ENCODE measurements at regions of chr6 and their contacts with region 1.

Region 1: DNA sequence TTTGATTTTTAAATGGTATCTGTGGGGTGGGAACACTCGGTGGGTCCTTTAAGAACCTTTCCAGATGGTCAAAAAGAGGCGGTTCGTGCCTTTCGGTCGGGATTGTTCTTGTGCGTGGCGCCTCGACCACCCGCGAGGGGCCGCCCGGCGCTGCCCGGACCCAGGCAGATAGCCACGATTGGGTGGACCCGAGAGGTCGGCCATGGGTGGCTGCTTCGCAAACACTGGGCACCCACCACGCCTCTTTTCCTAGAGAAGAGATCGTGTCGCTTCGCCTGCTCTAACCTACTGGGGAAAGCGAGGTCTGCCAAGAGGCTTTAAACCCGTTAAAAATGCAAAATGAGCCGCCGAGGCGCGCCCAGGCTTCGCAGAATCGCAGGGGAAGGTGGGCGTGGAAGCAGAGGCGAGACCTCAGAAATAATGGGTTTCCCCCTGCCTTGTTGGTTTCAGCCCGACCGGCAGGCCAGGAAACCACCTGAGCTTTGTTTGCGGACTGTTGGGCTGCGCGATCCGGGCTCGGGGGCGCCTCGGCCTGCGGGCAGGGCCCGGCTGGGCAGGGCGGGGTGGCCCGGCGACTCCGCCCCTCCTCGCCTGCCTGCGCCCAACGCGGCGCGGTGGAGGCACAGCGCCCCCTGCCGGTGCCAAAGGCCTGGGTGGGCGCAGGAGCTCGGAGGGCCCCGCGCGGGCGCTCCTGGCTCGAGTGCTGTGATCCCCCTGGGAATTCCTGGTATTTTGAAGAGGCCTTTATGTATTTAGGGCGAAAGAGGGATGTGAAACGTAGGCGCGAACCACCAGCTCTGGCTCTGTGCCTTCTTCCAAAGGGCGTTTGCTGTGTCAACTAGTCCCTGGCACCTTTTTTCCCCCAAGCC is 1.6 kb downstream of the MARCKS start:
- DNase-seq: peak; percentile 87 to 96 (median 95)
- ATAC-seq: peak; percentile 93 to 95
- H3K4me3 ChIP-seq: peak overlapping the region; percentile 97
- H3K27ac ChIP-seq: peak overlapping the region; percentile 89
- H3K4me1 ChIP-seq: no peaks in the 10 kb centered on the region
- H3K27me3 ChIP-seq: no peaks in the 10 kb centered on the region

Region 2: DNA sequence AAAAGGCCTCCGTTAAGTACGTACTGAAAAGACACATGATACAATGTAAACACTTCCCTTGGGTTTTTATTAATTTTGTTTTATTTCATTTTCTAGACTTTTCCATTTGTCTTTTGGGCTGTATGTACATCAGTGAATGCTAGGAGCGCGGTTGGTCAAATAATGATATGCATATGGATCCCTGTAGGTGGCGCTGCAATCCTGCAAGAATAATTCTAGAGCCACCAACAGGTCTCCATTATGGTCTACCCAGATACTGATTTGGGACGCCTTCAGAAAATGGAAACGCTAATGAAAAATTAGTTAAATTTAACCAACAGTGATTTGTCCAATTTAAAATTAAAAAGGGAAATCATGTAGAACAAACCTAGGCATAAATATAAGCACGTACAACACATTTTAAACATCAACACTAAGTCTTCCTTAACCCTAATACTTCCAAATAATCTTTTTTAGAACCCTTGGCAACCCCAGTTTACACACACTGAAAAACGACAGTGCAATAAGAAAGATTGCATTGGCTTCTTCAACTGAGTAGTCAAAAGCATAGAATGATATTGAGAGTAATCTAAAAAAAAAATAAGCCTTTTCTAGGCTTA is 1078.1 kb before region 1 on chr6:
- intact Hi-C with region 1: loop called in 1 of 4 experiments (anchors 10 kb)
- DNase-seq: peak; percentile 62 to 70 (median 64)
- ATAC-seq: peak; percentile 89 to 94
- H3K4me3 ChIP-seq: no peak overlapping the region
- H3K27ac ChIP-seq: no peak overlapping the region
- H3K4me1 ChIP-seq: no peaks in the 10 kb centered on the region
- H3K27me3 ChIP-seq: no peaks in the 10 kb centered on the region

Region 3: DNA sequence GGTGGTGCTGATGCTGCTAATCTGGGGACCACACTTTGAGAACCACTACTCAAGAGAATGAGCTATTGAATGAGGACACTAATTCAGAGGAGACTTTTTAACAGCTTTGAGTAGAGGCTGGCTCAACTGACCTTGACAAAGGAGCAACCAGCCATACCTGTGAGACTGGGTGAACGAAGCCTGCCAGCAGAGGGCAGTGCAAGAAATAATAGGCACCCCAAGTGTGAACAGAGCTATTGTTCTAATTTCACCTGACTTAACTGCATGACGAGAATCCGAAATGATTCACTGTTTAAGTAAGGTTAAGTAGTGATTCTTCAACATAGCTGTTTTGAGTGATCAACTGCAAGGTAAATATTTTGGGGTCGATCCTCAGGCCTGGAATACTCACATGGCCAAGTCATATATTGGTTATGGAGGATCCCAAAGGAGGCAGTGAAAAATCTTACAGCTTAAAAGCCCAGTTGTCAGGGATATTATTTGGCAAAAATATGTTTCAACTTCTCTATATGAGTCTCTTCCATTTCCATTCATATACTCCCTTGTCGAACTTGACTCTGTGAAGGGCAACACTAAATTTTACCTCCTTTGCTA is 552.1 kb before region 1 on chr6:
- intact Hi-C with region 1: loop called in 1 of 4 experiments (anchors 5 kb)
- DNase-seq: peak; percentile 55 to 89 (median 57)
- ATAC-seq: peak; percentile 74 to 79
- H3K4me3 ChIP-seq: no peak overlapping the region
- H3K27ac ChIP-seq: no peak overlapping the region
- H3K4me1 ChIP-seq: no peaks in the 10 kb centered on the region
- H3K27me3 ChIP-seq: no peaks in the 10 kb centered on the region

Region 4: GRCh38 chr6:113416170-113416569 is 442.5 kb before region 1 on chr6:
- intact Hi-C with region 1: loop called in 1 of 4 experiments (anchors 5 kb)
- DNase-seq: peak in 2 of 3 donors; percentile 18 to 35
- ATAC-seq: no peak
- H3K4me3 ChIP-seq: no peak overlapping the region
- H3K27ac ChIP-seq: no peak overlapping the region
- H3K4me1 ChIP-seq: no peaks in the 10 kb centered on the region
- H3K27me3 ChIP-seq: no peaks in the 10 kb centered on the region

Region 5: GRCh38 chr6:113564371-113565161 is 294.1 kb before region 1 on chr6:
- intact Hi-C with region 1: loop called in 2 of 4 experiments (anchors 10 kb)
- DNase-seq: peak; percentile 75 to 89 (median 88)
- ATAC-seq: peak; percentile 98 to 99
- H3K4me3 ChIP-seq: peak overlapping the region; percentile 21
- H3K27ac ChIP-seq: peak overlapping the region; percentile 43
- H3K4me1 ChIP-seq: peaks cover 4% of the 10 kb centered on the region
- H3K27me3 ChIP-seq: no peaks in the 10 kb centered on the region